ENCODE measurements at regions of chr3 and their contacts with region 1.

Region 1: DNA sequence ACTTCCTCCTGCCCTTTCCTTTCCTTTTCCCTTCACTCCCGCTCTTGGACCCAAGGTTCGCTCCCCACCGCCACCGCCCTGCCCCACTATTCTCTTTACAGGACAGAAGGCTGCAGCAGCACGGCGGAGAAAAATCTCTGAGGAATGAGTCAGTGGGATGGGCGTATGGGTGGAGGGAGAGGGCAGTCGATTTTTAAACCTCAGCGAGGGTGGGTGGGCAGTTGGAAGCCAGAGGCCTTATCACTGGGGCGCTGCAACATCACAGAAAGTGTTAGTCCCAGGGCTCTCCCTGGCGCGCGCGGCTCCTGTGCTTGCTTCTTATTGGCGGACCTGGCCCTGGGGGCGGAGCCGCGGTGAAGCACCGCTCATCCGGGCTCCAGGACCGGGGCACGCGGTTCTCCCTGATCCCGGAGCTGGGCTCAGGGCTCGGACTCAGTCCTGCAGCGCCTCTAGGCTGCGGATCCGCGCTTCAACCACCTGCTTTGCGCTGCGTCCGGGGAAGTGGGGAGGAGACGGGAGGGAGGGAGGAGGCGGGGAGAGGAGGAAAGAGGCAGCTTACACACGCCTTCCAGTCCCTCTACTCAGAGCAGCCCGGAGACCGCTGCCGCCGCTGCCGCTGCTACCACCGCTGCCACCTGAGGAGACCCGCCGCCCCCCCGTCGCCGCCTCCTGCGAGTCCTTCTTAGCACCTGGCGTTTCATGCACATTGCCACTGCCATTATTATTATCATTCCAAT is at the start of gene ALCAM:
- DNase-seq: peak; percentile 72 to 98 (median 96)
- H3K4me3 ChIP-seq: peak within 1 kb of the TSS; percentile 51 to 96 (median 83)
- H3K27ac ChIP-seq: peak within 1 kb of the TSS; percentile 74 to 98 (median 95)
- H3K27me3 ChIP-seq: no peaks in the 10 kb centered on the region
- CTCF ChIP-seq: peak; percentile 38 to 85 (median 71)
- total RNA-seq, gene ALCAM: 43.9 to 211 (median 78.4) TPM

Region 2: GRCh38 chr3:104273046-104273649 is 1093.3 kb before region 1 on chr3:
- intact Hi-C with region 1: loop called (anchors 5 to 10 kb)
- DNase-seq: no peak
- H3K4me3 ChIP-seq: no peak overlapping the region
- H3K27ac ChIP-seq: no peak overlapping the region
- H3K27me3 ChIP-seq: no peaks in the 10 kb centered on the region
- CTCF ChIP-seq: peak; percentile 47 to 85 (median 71)

Region 3: GRCh38 chr3:104596551-104596950 is 769.9 kb before region 1 on chr3:
- intact Hi-C with region 1: loop called (anchors 10 kb)
- DNase-seq: no peak
- H3K4me3 ChIP-seq: no peak overlapping the region
- H3K27ac ChIP-seq: no peak overlapping the region
- H3K27me3 ChIP-seq: no peaks in the 10 kb centered on the region
- CTCF ChIP-seq: peak in 53 of 56 donors; percentile 15 to 65 (median 46)

Region 4: DNA sequence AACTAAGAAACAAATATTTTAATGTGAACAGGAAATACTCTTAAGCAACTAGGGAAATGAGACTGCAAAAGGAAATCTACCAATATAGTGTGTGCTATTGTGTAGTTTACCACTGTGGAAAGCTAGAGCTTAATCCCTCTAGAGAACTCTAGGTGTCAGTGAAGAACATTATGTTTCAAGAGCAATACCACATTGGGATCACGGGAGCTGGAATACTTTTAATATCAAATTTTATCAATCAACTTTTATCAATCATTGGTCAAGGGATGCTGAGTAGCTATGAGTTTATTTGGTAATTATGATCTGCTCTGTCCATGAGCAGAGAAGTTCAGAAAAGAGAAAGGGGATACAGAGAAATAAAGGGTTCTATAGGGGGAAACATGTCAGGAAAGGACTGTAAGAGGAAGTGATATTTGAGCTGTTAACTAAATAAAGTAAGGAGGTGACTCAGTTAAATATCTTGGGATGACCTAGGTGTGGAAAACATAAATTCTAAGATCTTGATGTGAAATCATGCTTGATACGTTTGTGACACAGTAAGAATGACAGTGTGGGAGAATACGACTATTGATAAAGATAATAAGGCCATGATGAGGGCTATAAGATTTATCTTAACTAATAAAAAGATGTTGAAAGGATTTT is 762.0 kb before region 1 on chr3:
- intact Hi-C with region 1: loop called (anchors 10 kb)
- DNase-seq: no peak
- H3K4me3 ChIP-seq: no peak overlapping the region
- H3K27ac ChIP-seq: no peak overlapping the region
- H3K27me3 ChIP-seq: no peaks in the 10 kb centered on the region
- CTCF ChIP-seq: peak in 23 of 56 donors; percentile 8 to 43 (median 26)

Region 5: DNA sequence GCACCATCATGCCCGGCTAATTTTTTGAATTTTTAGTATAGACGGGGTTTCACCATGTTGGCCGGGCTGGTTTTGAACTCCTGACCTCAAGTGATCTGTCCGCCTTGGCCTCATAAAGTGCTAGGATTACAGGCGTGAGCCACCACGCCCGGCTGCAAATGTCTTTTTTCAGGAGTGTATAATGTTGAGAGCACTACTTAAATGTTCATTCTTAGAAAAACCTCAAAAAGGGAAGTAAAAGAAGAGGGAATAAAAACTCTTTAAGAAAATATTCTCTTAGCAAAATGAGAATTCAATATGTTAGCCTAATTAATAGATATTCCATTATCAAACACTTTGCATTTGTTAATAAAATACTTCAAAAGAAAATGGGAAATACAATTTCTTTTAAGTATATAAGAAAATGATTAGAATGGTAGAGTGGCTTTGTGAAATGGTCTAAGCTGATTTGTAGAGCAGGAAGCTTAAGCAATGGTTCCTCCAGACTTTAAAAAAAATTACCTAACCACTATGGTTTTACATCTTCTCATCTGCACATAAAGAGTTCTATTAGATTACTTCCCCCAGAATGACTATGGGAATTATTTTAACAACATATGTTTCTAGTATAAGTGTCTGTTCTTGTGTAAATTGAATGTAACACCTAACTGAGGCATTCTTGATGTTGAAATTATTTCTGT is 226.5 kb before region 1 on chr3:
- intact Hi-C with region 1: loop called in 1 of 2 experiments (anchors 10 kb)
- DNase-seq: no peak
- H3K4me3 ChIP-seq: no peak overlapping the region
- H3K27ac ChIP-seq: no peak overlapping the region
- H3K27me3 ChIP-seq: no peaks in the 10 kb centered on the region
- CTCF ChIP-seq: no peak

Region 6: DNA sequence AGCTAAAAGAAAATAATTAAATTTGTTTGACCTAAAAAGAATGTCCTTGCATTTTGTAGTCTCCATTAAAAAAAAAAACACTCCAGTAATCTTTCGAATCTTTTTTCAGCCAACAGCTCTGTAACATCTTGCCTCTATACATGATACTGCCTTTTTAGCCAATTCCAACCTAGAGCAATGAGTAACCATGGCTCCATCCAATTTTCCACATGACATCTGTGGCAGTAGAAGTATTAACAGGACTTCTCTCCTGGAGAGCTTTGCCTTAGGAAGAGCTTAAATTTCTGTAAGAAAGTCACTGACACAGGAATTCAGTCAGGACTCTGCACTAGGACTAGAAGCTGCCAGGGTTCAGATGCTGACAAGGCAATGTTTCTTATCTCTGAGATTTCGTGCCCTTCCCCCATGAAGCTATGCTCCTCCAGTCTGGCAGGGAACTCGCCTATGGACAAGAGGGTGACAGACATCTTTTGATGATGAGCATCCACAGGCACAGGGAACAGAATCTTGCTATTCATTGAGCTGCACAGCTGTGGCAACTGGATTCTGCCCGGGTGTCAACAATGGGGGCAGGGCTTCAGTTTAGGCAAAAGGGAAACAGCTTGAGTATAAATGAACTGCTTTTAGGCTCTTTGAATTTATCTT is 82.0 kb after region 1 on chr3:
- intact Hi-C with region 1: loop called (anchors 1 kb)
- DNase-seq: peak; percentile 13 to 95 (median 83)
- H3K4me3 ChIP-seq: peak overlapping the region in 36 of 59 donors; percentile 2 to 55 (median 30)
- H3K27ac ChIP-seq: peak overlapping the region; percentile 60 to 100 (median 92)
- H3K27me3 ChIP-seq: no peaks in the 10 kb centered on the region
- CTCF ChIP-seq: peak in 7 of 56 donors; percentile 7 to 20 (median 17)

Region 7: DNA sequence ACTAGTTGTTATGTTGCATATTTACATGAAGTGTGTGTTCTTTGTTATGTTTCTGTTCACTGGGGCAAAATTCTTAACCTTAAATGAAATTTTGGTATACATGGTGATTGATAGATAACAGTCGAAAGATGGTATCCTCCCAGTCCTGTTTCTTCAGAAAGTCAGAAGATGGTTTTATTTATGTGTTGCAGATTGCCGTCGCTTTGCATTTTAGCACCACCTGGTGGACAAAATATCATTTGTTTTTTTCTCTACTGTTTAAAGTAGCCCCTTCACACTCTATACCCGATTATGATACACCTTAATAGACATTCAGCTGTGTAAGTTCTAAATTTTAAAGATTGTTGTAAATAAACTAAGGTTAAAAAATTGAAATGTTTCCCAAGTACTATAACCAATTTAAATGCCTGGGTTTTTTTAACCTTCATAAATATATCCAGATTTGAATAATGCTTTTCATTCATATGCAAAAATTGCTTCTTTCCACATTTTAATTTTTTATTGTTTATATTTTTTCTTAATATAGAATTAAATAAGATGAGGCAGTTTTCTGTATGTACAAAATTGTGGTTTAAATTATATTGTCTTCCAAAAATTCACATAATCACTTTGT is 152.4 kb after region 1 on chr3:
- intact Hi-C with region 1: loop called (anchors 2 kb)
- DNase-seq: peak in 1 of 10 donors; percentile 14
- H3K4me3 ChIP-seq: peak overlapping the region in 15 of 59 donors; percentile 3 to 33 (median 20)
- H3K27ac ChIP-seq: peak overlapping the region in 50 of 59 donors; percentile 3 to 85 (median 70)
- H3K27me3 ChIP-seq: no peaks in the 10 kb centered on the region
- CTCF ChIP-seq: peak; percentile 67 to 98 (median 85)

Measured in dorsolateral prefrontal cortex (tissue), 120 donors.